H1 (cell line): ENCODE measurements at regions of chr22 and their contacts with region 1.

Region 1: DNA sequence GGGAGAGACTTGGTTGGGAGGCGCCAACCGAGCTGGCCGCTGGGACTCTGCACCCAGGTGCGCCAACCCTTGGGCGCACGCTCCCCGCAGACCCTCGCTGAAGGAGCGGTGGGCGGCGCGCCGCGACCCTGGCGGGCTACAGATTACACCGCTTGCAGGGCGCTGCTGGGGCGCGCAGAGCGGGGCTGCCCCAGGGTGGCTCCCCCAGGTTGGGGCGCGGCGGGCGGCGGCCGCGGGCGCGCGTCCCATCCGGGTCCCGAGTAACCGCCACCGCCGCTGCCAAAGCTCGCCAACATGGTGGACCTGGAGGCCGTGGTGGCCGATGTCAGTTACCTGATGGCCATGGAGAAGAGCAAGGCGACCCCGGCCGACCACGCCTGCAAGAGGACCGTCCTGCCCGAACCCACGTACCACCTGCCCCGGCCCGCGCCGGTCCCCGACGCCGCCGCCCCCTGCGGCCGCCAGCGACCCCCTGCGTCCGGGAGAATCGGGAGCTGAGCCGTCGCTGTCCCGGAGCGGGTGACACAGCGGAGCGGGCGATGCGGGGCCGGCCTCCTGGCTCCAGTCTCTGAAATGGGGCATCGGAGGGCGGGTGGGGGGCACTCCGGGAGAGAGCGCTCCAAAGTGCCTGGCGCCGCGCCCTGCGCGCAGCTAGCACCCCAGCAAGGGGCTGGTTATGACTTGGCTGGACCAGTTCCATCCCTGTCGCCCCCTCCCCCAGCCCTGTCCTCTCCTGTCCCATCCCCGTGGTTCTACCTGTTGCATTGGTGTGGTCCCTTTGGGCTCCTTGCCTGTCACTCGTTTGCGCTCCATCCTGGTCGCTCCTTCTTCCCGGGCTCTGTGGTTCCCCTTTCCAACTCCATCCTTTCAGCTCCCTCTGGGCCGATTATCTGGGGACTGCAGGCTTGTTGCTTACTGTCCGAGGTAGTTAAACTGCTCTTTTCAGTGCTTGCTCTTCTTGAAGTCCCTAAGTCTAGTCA is 143.3 kb upstream of the GRK3 start:
- DNase-seq: peak in 1 of 2 experiments; percentile 70
- H3K4me3 ChIP-seq: peak overlapping the region; percentile 45 to 86 (median 54)
- H3K27ac ChIP-seq: no peak overlapping the region
- H3K4me1 ChIP-seq: peaks cover 4 to 12% (median 6%) of the 10 kb centered on the region in 4 experiments; a peak in 6 of 7 replicates
- H3K27me3 ChIP-seq: peaks cover 11 to 28% (median 20%) of the 10 kb centered on the region in 4 experiments
- CTCF ChIP-seq: peak in 1 of 3 experiments; percentile 8; a peak in 1 of 4 replicates
- EP300 ChIP-seq: no peak
- POLR2A ChIP-seq: no peak
- RAD21 ChIP-seq: peak; percentile 15 to 43; a peak in 2 of 4 replicates

Region 2: GRCh38 chr22:25219948-25220442 is 201.2 kb before region 1 on chr22:
- CTCF ChIA-PET with region 1: no interaction called
- POLR2A ChIA-PET with region 1: no interaction called
- DNase-seq: no peak
- H3K4me3 ChIP-seq: no peak overlapping the region
- H3K27ac ChIP-seq: no peak overlapping the region
- H3K4me1 ChIP-seq: no peaks in the 10 kb centered on the region
- H3K27me3 ChIP-seq: peaks cover 0 to 4% (median 0%) of the 10 kb centered on the region in 4 experiments; a peak in 2 of 7 replicates
- CTCF ChIP-seq: no peak
- EP300 ChIP-seq: no peak
- POLR2A ChIP-seq: no peak
- RAD21 ChIP-seq: no peak

Region 3: GRCh38 chr22:25409240-25409639 is 12.0 kb before region 1 on chr22:
- CTCF ChIA-PET with region 1: interaction called, 10 read pairs
- POLR2A ChIA-PET with region 1: interaction called, 7 read pairs
- DNase-seq: no peak
- H3K4me3 ChIP-seq: no peak overlapping the region
- H3K27ac ChIP-seq: no peak overlapping the region
- H3K4me1 ChIP-seq: peaks cover 0 to 17% (median 14%) of the 10 kb centered on the region in 4 experiments; a peak in 6 of 7 replicates
- H3K27me3 ChIP-seq: peaks cover 0 to 6% (median 6%) of the 10 kb centered on the region in 4 experiments; a peak in 4 of 7 replicates
- CTCF ChIP-seq: no peak
- EP300 ChIP-seq: no peak
- POLR2A ChIP-seq: no peak
- RAD21 ChIP-seq: no peak

Region 4: GRCh38 chr22:25447686-25448434 is 26.6 kb after region 1 on chr22:
- CTCF ChIA-PET with region 1: interaction called, 12 read pairs
- POLR2A ChIA-PET with region 1: no interaction called
- DNase-seq: peak; percentile 53 to 97
- H3K4me3 ChIP-seq: peak overlapping the region; percentile 58 to 92 (median 76)
- H3K27ac ChIP-seq: no peak overlapping the region
- H3K4me1 ChIP-seq: peaks cover 0 to 5% (median 0%) of the 10 kb centered on the region in 4 experiments; a peak in 3 of 7 replicates
- H3K27me3 ChIP-seq: no peaks in the 10 kb centered on the region
- CTCF ChIP-seq: peak; percentile 83 to 99 (median 98)
- EP300 ChIP-seq: no peak
- POLR2A ChIP-seq: peak in 1 of 2 experiments; percentile 64; a peak in 2 of 3 replicates
- RAD21 ChIP-seq: peak; percentile 42 to 57